ENCODE measurements at regions of chr14 and their contacts with region 1.

Region 1: GRCh38 chr14:35416108-35416750 is 11.7 kb upstream of the NFKBIA start:
- DNase-seq: peak; percentile 55
- ATAC-seq: 0 out of 2 replicates have a peak, but pooled peaks have one; percentile 3
- H3K4me3 ChIP-seq: no peak overlapping the region
- H3K27ac ChIP-seq: no peak overlapping the region
- H3K4me1 ChIP-seq: peaks cover 25% of the 10 kb centered on the region
- H3K27me3 ChIP-seq: no peaks in the 10 kb centered on the region
- CTCF ChIP-seq: no peak

Region 2: GRCh38 chr14:34982417-34983147 is 433.6 kb before region 1 on chr14 and contains the start of gene SRP54:
- CTCF ChIA-PET with region 1: no interaction called
- POLR2A ChIA-PET with region 1: no interaction called
- intact Hi-C with region 1: loop called (anchors 5 kb)
- DNase-seq: peak; percentile 97
- ATAC-seq: peak; percentile 75
- H3K4me3 ChIP-seq: peak within 1 kb of the TSS; percentile 78
- H3K27ac ChIP-seq: peak within 1 kb of the TSS; percentile 93
- H3K4me1 ChIP-seq: peaks cover 19% of the 10 kb centered on the region
- H3K27me3 ChIP-seq: no peaks in the 10 kb centered on the region
- CTCF ChIP-seq: 0 out of 2 replicates have a peak, but pooled peaks have one; percentile 6
- total RNA-seq, gene SRP54: 49.3 and 75.5 TPM in 2 replicates

Region 3: GRCh38 chr14:35140718-35141581 is 275.3 kb before region 1 on chr14:
- CTCF ChIA-PET with region 1: interaction called, 3 read pairs
- POLR2A ChIA-PET with region 1: no interaction called
- intact Hi-C with region 1: loop called (anchors 1 kb)
- DNase-seq: peak; percentile 61
- ATAC-seq: peak; percentile 20; the same call in 1 of the 2 replicates
- H3K4me3 ChIP-seq: no peak overlapping the region
- H3K27ac ChIP-seq: no peak overlapping the region
- H3K4me1 ChIP-seq: no peaks in the 10 kb centered on the region
- H3K27me3 ChIP-seq: no peaks in the 10 kb centered on the region
- CTCF ChIP-seq: peak; percentile 73

Region 4: DNA sequence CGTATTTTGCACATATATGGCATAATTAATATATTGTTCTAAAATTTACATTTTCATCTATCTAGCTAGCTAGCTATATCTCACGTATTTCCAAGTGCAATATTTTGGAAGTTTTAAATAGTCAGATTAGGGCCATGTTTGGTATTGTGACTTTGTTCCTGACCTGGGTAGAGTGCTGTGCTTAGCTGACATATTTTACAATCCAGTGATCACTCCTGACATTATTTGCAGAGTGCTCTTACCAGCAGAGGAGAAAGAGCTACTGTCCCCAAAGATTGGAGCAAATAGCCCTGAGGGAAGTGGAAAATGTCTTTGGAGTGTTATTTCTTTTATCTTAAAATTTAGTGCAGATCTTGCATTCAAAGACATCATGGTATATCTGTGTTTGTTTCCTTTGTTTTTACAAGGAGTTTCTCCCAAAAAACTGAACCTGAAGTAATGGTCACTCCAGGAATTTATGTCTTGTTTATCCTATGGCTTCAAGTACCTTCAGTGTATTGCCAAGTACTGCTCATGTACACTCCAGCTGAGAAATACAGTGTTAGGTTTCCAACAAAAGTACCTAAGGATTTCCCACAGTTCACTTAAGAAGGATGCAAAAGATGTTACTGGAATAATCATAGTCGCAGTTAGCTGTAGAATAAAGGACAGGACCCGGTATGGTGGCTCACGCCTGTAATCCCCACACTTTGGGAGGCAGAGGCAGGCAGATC is 173.5 kb before region 1 on chr14:
- CTCF ChIA-PET with region 1: no interaction called
- POLR2A ChIA-PET with region 1: no interaction called
- intact Hi-C with region 1: no loop called
- DNase-seq: no peak
- ATAC-seq: no peak
- H3K4me3 ChIP-seq: no peak overlapping the region
- H3K27ac ChIP-seq: no peak overlapping the region
- H3K4me1 ChIP-seq: no peaks in the 10 kb centered on the region
- H3K27me3 ChIP-seq: no peaks in the 10 kb centered on the region
- CTCF ChIP-seq: no peak

Region 5: DNA sequence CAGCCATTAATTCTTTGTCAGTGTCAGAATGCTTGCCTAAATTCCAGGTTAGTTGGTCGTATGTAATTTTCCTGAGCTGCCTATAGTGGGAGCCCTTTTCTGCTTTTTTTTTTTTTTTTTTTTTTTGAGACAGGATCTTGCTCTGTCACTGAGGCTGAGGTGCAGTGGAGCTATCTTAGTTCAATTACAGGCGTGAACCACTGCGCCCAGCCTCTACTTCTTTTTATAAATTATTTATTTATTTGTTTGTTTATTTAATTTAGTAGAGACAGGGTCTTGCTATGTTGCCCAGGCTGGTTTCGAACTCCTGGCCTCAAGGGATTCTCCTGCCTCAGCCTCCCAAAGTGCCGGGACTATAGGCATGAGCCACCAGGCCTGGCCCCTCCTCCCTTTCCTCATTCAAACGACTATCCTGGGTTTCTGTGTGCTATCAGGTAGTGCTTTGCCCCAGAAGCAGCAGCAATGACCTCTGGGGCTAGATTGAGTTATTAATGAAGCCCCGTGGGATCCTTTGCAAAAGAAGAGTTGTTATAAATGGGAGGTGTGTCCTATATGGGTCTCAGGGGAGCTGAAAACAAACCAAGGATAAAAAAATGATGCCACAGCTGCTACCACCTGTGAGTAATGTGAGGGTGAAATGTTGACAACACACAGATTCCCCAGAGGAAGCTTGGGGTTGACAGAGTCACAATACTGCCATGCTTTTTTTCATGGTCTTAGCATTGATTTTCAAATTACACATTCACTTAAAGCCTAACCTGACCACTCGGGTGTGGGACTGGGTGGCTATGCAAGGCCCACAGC is 22.9 kb after region 1 on chr14:
- CTCF ChIA-PET with region 1: interaction called, 11 read pairs
- POLR2A ChIA-PET with region 1: no interaction called
- intact Hi-C with region 1: no loop called
- DNase-seq: peak; percentile 37
- ATAC-seq: no peak; the same call in 1 of the 2 replicates
- H3K4me3 ChIP-seq: no peak overlapping the region
- H3K27ac ChIP-seq: no peak overlapping the region
- H3K4me1 ChIP-seq: no peaks in the 10 kb centered on the region
- H3K27me3 ChIP-seq: no peaks in the 10 kb centered on the region
- CTCF ChIP-seq: peak; percentile 60

Region 6: DNA sequence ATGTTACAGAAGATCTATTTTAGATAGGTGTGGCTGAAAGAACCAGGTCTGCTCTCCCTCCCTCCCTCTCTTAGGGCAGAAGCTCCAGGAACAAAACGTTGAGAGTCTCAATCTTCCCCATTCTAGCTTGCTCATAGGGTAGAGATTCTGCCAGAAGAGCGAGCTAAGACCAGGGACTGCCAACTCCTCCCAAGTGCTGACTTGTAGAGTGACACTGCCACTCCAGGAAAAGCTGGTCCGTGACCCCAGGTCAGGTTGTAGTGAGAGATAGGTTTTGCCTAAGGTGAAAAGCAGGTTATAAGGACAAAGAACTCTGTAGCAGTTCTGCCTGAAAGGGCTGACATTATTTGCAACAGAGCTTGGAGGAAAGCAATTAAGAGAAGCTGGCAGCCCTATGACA is 191.2 kb after region 1 on chr14:
- CTCF ChIA-PET with region 1: no interaction called
- POLR2A ChIA-PET with region 1: interaction called, 16 read pairs
- intact Hi-C with region 1: no loop called
- DNase-seq: no peak
- ATAC-seq: no peak
- H3K4me3 ChIP-seq: no peak overlapping the region
- H3K27ac ChIP-seq: no peak overlapping the region
- H3K4me1 ChIP-seq: no peaks in the 10 kb centered on the region
- H3K27me3 ChIP-seq: no peaks in the 10 kb centered on the region
- CTCF ChIP-seq: no peak

Region 7: GRCh38 chr14:35814371-35815005 is 398.3 kb after region 1 on chr14:
- CTCF ChIA-PET with region 1: interaction called, 4 read pairs
- POLR2A ChIA-PET with region 1: no interaction called
- intact Hi-C with region 1: loop called (anchors 10 kb)
- DNase-seq: peak; percentile 74
- ATAC-seq: peak; percentile 64
- H3K4me3 ChIP-seq: no peak overlapping the region
- H3K27ac ChIP-seq: no peak overlapping the region
- H3K4me1 ChIP-seq: no peaks in the 10 kb centered on the region
- H3K27me3 ChIP-seq: no peaks in the 10 kb centered on the region
- CTCF ChIP-seq: peak; percentile 80

Measured in PC-3 (cell line).